ENCODE measurements at regions of chr17 and their contacts with region 1.

Region 1: GRCh38 chr17:57671667-57672632 is 73.1 kb downstream of the CCDC182 start:
- DNase-seq: peak; percentile 81 to 95
- ATAC-seq: peak; percentile 93 to 99
- H3K4me3 ChIP-seq: no peak overlapping the region
- H3K27ac ChIP-seq: peak overlapping the region; percentile 36 to 48; a peak in 4 of 6 replicates
- H3K4me1 ChIP-seq: peaks cover 14% of the 10 kb centered on the region
- CTCF ChIP-seq: peak; percentile 98
- EP300 ChIP-seq: no peak
- POLR2A ChIP-seq: no peak
- RAD21 ChIP-seq: peak; percentile 93 to 96

Region 2: GRCh38 chr17:57130761-57131461 is 541.0 kb before region 1 on chr17:
- CTCF ChIA-PET with region 1: interaction called, 12 read pairs
- POLR2A ChIA-PET with region 1: no interaction called
- DNase-seq: peak; percentile 82 to 99
- ATAC-seq: peak; percentile 95 to 96
- H3K4me3 ChIP-seq: peak overlapping the region; percentile 38
- H3K27ac ChIP-seq: peak overlapping the region; percentile 66 to 84
- H3K4me1 ChIP-seq: no peaks in the 10 kb centered on the region
- CTCF ChIP-seq: peak; percentile 99
- EP300 ChIP-seq: no peak
- POLR2A ChIP-seq: no peak
- RAD21 ChIP-seq: peak; percentile 92 to 100

Region 3: GRCh38 chr17:57429966-57430365 is 242.0 kb before region 1 on chr17:
- CTCF ChIA-PET with region 1: no interaction called
- POLR2A ChIA-PET with region 1: no interaction called
- DNase-seq: no peak
- ATAC-seq: no peak
- H3K4me3 ChIP-seq: no peak overlapping the region
- H3K27ac ChIP-seq: no peak overlapping the region
- H3K4me1 ChIP-seq: peaks cover 8% of the 10 kb centered on the region; the same call in 2 of the 3 replicates
- CTCF ChIP-seq: no peak
- EP300 ChIP-seq: no peak
- POLR2A ChIP-seq: no peak
- RAD21 ChIP-seq: no peak

Region 4: GRCh38 chr17:57604771-57605674 is 66.9 kb before region 1 on chr17:
- CTCF ChIA-PET with region 1: interaction called, 104 read pairs
- POLR2A ChIA-PET with region 1: no interaction called
- DNase-seq: no peak
- ATAC-seq: no peak; a peak in 1 of 6 replicates
- H3K4me3 ChIP-seq: no peak overlapping the region
- H3K27ac ChIP-seq: no peak overlapping the region
- H3K4me1 ChIP-seq: peaks cover 20% of the 10 kb centered on the region
- CTCF ChIP-seq: no peak
- EP300 ChIP-seq: no peak
- POLR2A ChIP-seq: no peak
- RAD21 ChIP-seq: no peak

Region 5: DNA sequence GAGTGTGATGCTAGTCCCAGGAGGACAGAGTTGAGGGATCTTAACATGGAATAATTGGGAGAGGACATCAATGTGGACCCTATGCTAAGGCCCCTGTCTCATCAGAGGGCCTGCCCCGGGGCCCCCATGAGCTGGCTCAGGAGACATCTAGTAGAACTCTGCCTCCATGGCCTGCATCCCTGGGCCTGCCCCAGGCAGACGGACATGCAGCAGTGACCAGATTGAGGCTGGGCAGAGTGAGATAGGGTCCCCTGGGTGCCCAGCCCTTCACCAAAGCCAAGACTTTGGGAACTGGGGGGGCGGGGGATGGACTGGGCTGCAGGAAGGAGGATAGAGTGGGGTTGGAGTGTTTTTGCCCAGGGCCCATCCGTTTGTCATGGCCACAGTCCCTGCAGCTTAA is 42.1 kb before region 1 on chr17:
- CTCF ChIA-PET with region 1: interaction called, 37 read pairs
- POLR2A ChIA-PET with region 1: no interaction called
- DNase-seq: no peak
- ATAC-seq: no peak
- H3K4me3 ChIP-seq: no peak overlapping the region
- H3K27ac ChIP-seq: no peak overlapping the region
- H3K4me1 ChIP-seq: no peaks in the 10 kb centered on the region
- CTCF ChIP-seq: no peak
- EP300 ChIP-seq: no peak
- POLR2A ChIP-seq: no peak
- RAD21 ChIP-seq: no peak

Region 6: DNA sequence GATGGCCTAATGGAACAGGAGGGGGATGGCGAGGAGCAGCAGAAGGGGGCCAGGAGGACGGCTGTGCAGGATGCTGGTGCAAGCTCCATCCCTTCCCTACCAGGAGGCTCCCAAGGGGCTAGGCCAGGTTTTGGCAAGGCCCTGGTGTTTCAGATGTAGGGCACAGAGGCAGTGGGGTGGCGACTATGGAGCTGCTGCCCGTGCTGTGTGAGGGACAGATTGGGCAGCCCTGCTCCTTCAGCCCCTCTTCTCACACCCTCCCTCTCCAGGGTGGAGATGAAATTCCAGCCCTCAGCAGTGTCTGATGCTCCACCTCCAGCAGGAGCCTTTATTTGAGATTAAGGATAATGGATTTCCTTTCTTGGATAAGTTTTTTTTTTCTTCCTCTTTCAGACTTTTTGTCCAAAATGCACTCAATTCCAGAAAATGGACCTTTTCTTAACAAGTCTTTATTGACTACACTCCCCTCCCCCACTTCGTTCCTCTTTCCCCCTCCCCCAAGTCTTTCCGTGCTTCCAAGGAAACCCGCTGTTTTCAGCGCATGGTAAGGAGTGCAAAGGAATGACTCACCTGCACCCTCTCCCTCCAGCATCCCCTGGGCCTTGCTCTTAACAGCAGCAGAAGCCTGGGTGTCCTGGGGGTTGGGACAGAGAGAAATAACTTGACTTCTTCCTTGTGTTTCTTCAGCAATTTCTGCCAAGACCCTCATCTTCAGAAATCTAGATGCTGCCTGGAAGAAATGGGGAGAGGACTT is 22.0 kb before region 1 on chr17:
- CTCF ChIA-PET with region 1: interaction called, 36 read pairs
- POLR2A ChIA-PET with region 1: no interaction called
- DNase-seq: peak; percentile 50 to 72
- ATAC-seq: peak; percentile 76 to 77; a peak in 5 of 6 replicates
- H3K4me3 ChIP-seq: no peak overlapping the region
- H3K27ac ChIP-seq: peak overlapping the region; percentile 59 to 84
- H3K4me1 ChIP-seq: peaks cover 34% of the 10 kb centered on the region
- CTCF ChIP-seq: no peak
- EP300 ChIP-seq: no peak
- POLR2A ChIP-seq: no peak
- RAD21 ChIP-seq: no peak

Region 7: DNA sequence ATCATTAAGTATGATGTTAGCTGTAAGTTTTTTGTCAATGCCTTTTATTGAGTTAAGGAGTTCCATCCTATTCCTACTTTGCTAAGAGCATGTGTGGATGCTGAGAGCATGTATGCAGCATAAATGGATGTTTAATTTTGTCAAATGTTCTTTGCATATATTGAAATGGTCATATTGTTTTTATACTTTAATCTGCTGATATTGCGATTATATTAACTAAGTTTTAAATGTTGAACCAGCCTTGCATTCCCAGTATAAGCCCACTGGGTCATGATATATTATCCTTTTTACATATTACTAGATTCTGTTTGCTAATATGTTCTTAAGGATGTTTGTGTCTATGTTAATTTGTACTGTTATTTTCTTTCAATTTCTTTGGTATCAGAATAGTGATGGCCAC is 20.0 kb after region 1 on chr17:
- CTCF ChIA-PET with region 1: interaction called, 26 read pairs
- POLR2A ChIA-PET with region 1: no interaction called
- DNase-seq: no peak
- ATAC-seq: no peak
- H3K4me3 ChIP-seq: no peak overlapping the region
- H3K27ac ChIP-seq: no peak overlapping the region
- H3K4me1 ChIP-seq: no peaks in the 10 kb centered on the region
- CTCF ChIP-seq: no peak
- EP300 ChIP-seq: no peak
- POLR2A ChIP-seq: no peak
- RAD21 ChIP-seq: no peak

Region 8: GRCh38 chr17:57718878-57719277 is 46.9 kb after region 1 on chr17:
- CTCF ChIA-PET with region 1: interaction called, 12 read pairs
- POLR2A ChIA-PET with region 1: no interaction called
- DNase-seq: no peak
- ATAC-seq: no peak
- H3K4me3 ChIP-seq: no peak overlapping the region
- H3K27ac ChIP-seq: no peak overlapping the region
- H3K4me1 ChIP-seq: no peaks in the 10 kb centered on the region
- CTCF ChIP-seq: no peak
- EP300 ChIP-seq: no peak
- POLR2A ChIP-seq: no peak
- RAD21 ChIP-seq: no peak